Mammary epithelial cell (primary cell): ENCODE measurements at regions of chr5 and their contacts with region 1.

Region 1: DNA sequence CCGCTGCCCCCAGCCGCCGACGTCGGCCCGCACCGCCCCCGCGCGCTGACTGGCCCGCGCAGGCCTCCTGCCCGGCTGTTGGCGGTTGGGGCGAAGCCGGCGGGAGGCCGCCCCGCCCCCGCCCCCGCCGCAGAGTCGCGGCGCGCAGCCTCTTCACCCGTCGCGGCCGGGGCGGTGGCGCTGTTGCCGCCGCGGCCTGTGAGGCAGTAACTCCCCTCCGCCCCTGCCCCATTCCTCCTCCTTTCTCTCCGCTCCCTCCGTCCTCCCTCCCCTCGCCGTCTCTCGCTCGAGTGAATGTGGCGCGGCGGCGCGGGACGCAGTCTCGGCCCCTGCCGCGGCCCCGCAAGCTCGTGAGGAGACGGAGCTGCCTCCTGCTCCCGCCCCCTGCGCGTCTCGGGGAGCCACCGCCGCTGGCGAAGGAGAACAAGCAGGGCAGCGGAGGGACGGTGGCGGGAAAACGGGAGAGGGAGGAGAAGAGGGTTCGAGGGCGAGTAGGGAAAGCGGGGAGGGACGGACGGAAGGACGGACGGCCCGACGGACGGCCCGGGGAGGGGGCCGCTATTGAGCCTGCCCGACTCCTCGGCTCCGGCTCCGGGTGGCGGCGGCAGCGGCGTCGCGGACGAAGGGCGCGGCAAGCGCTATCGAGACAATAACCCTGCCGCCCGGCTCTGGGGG is 637 bp upstream of the ERBIN start:
- DNase-seq: peak; percentile 82
- H3K4me3 ChIP-seq: peak overlapping the region; percentile 85 to 97 (median 86)
- H3K27ac ChIP-seq: peak overlapping the region; percentile 94
- H3K4me1 ChIP-seq: peaks cover 4% of the 10 kb centered on the region
- H3K27me3 ChIP-seq: no peaks in the 10 kb centered on the region
- CTCF ChIP-seq: peak in 1 of 2 donors; percentile 43

Region 2: DNA sequence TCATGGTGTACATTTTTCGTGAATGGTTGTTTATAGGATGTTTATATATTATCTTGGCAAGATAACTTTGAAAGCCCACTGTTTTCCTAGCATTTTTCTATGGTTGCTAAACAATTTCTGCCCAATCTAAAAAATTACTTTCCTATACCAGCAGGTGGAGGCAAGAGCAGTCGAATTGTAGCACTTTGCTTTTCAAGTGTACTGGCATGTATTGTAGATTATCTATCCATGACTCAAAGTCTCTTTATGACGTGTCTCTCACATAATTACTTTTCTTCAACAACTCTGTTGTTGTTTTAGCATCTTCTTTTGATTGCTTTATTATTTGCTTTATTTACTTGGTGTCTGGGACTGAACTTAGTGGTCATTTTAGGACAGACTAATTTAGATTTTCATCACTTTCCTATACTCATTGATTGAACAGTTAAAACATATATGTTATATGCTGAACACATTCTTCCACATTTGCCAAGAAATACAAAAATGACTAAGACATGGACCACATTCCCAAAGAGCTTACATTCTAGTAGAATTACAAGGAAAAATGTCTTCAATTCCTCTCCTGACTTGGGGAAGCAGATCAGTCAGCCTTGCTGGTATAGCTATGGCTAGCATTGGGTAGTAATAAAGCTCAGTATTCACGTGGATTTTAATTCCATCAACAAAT is 183.0 kb before region 1 on chr5:
- CTCF ChIA-PET with region 1: no interaction called
- dilution Hi-C with region 1: no loop called
- in situ Hi-C with region 1: no loop called
- intact Hi-C with region 1: loop called (anchors 1 kb)
- DNase-seq: peak; percentile 76
- H3K4me3 ChIP-seq: no peak overlapping the region
- H3K27ac ChIP-seq: peak overlapping the region; percentile 11
- H3K4me1 ChIP-seq: peaks cover 4% of the 10 kb centered on the region
- H3K27me3 ChIP-seq: no peaks in the 10 kb centered on the region
- CTCF ChIP-seq: peak; percentile 75 to 82

Region 3: DNA sequence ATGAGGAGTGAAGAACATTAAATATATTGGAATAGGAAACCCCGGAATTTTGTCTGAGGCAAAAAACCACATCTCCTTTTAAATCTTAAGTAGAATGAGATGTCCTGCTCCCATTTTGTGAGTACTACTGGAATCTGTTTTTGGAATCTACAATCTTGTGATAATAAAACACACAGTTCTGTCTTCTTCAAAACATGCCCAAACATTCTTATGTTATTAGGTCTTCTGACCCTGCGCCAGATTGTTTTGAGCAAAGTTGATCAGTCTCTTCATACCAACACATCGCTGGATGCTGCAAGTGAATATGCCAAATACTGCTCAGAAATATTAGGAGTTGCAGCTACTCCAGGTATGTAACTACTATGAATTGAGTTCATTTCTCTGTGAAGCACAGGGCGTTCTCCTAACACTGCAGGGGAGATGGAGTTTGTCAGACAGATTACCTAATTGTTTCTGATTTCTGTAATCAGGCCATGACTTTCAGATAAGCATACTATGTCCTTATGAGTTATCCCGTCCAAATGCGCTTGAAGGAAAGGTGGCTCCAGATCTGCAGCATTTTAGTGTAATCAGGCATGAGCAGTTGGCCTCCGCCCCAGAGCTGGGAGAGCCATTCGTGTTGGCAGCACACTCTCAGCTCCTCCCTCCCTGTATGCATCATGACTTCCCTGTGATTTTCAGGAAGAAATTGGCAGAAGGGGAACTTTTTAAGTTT is 115.8 kb before region 1 on chr5:
- CTCF ChIA-PET with region 1: no interaction called
- dilution Hi-C with region 1: no loop called
- in situ Hi-C with region 1: no loop called
- intact Hi-C with region 1: loop called (anchors 5 kb)
- DNase-seq: no peak
- H3K4me3 ChIP-seq: no peak overlapping the region
- H3K27ac ChIP-seq: no peak overlapping the region
- H3K4me1 ChIP-seq: peaks cover 28% of the 10 kb centered on the region
- H3K27me3 ChIP-seq: no peaks in the 10 kb centered on the region
- CTCF ChIP-seq: no peak

Region 4: DNA sequence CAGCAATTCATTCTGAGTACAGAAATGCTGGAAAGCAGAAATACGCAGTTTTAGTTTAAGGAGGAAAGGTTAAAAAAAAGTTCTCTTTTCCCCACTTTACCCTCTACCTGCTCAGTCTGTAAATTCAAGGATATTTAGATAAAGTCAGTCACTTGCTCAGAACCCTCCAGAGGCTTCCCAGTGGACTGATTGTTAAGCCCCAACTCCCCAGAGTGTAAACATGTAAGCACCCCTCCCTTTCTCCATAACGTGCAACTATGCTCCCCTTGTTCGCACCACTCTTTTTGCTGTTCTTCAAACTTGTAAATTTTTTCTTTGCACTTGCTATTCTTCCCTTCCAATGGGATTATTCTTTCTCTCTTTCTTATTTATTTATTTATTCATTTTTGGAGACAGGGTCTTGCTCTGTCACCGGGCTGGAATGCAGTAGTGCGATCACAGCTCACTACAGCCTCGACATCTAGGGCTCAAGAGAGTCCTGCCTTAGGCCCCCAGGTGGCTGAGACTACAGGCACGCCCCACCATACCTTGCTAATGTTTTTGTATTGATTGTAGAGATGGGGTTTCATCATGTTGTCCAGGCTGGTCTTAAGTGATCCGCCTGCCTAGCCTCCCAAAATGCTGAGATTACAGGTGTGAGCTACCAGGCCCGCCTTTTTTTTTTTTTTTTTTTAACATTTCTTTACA is 31.8 kb before region 1 on chr5:
- CTCF ChIA-PET with region 1: no interaction called
- dilution Hi-C with region 1: no loop called
- in situ Hi-C with region 1: no loop called
- intact Hi-C with region 1: no loop called
- DNase-seq: no peak
- H3K4me3 ChIP-seq: no peak overlapping the region
- H3K27ac ChIP-seq: no peak overlapping the region
- H3K4me1 ChIP-seq: no peaks in the 10 kb centered on the region
- H3K27me3 ChIP-seq: no peaks in the 10 kb centered on the region
- CTCF ChIP-seq: no peak

Region 5: GRCh38 chr5:65967288-65968066 is 41.7 kb after region 1 on chr5:
- CTCF ChIA-PET with region 1: no interaction called
- dilution Hi-C with region 1: no loop called
- in situ Hi-C with region 1: no loop called
- intact Hi-C with region 1: loop called (anchors 5 kb)
- DNase-seq: peak; percentile 76
- H3K4me3 ChIP-seq: no peak overlapping the region
- H3K27ac ChIP-seq: no peak overlapping the region
- H3K4me1 ChIP-seq: peaks cover 6% of the 10 kb centered on the region
- H3K27me3 ChIP-seq: no peaks in the 10 kb centered on the region
- CTCF ChIP-seq: no peak

Region 6: GRCh38 chr5:66144074-66144833 is 218.5 kb after region 1 on chr5 and contains the start of gene SREK1:
- CTCF ChIA-PET with region 1: no interaction called
- dilution Hi-C with region 1: no loop called
- in situ Hi-C with region 1: no loop called
- intact Hi-C with region 1: loop called (anchors 1 kb)
- DNase-seq: peak; percentile 94
- H3K4me3 ChIP-seq: peak within 1 kb of the TSS; percentile 69 to 89 (median 89)
- H3K27ac ChIP-seq: peak within 1 kb of the TSS; percentile 96
- H3K4me1 ChIP-seq: peaks cover 14% of the 10 kb centered on the region
- H3K27me3 ChIP-seq: no peaks in the 10 kb centered on the region
- CTCF ChIP-seq: no peak
- total RNA-seq, gene SREK1: 62.2 to 71.5 TPM